Naive thymus-derived CD4-positive, alpha-beta T cell (primary cell): ENCODE measurements at regions of chr17 and their contacts with region 1.

Region 1: DNA sequence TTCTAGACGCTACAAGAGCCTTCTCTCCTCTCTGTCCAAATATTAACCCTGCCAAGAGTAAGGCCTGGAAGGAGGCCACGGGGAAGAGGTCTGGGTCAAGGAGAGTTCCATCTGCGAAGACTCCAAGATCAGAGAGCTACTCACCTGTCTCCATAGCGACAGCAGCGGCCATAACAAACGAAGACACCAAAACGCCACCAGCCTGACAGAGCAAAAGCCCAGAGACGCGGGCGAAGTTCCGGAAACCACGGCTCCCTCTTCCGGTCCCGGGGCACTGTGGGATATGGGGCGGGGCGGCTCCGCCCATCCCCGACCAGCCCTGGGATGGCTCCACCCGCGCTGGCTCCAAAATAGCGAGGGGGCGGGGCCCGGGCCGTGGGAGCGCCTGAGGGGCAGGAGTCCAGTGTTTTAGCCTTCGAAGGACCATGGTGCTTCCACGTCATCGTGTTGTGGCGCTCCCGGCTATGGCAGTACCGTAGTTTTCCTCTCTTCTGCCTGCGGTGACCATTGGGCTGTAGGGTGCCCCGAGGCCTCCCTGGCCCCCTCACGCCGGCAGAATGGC is at the starts of genes C17orf100 and MED31:
- DNase-seq: peak; percentile 89 to 97 (median 93)
- ATAC-seq: peak; percentile 96
- H3K4me3 ChIP-seq: peak within 1 kb of the TSS; percentile 99
- H3K4me3 Mint-ChIP-seq: peak within 1 kb of the TSS; percentile 89 to 100 (median 96)
- H3K27ac ChIP-seq: peak within 1 kb of the TSS; percentile 95
- H3K27ac Mint-ChIP-seq: peak within 1 kb of the TSS; percentile 97 to 100 (median 99)
- H3K4me1 ChIP-seq: peaks cover 21 to 26% of the 10 kb centered on the region in 2 donors
- H3K4me1 Mint-ChIP-seq: peaks cover 37 to 87% (median 78%) of the 10 kb centered on the region in 7 donors
- H3K27me3 ChIP-seq: no peaks in the 10 kb centered on the region
- H3K27me3 Mint-ChIP-seq: peaks cover 0 to 29% (median 0%) of the 10 kb centered on the region in 5 donors
- total RNA-seq, gene C17orf100: 1.9 to 6.1 (median 1.9) TPM
- total RNA-seq, gene MED31: 21.4 to 41.2 (median 28.2) TPM

Region 2: DNA sequence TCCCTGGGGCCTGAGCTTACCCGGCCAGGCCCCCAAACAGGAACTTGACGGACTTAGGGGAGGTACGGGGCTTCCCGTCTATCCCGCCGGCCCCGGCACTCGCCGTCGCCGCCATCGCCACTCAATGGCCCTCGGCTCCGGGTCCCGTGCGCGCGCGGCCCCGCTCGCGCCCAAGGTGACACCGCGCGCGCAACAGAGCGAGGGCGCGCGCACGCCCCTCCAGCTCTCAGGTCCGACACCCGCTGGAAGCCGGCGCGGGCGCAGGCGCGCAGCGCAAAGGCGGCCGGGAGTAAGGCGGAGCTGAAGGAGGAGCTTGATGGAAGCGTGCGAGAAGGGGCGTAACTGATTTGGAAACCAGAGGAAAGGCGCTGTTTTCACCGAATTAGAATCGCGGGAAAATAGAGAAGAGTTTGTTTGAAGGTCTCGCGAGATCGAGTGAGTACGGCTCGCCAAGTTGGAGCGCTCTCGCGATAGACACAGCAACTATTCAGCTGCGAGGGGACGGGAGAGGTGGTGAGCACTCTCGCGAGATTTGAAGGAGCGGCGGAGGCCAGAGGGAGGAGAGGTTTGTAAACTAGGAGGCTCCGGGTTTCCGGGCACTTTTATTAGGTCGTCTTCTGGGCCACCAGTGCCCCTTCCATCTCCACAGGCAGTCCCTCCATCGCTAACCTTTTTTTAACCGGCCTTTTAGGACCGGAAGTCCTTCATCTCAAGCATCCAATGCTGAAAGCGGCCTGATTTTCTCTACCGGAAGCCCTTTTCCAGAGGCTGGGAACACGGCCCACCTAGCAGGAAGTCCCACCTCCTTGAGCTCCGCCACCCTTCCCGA is 1711.4 kb before region 1 on chr17 and contains the starts of genes RNF167 and SLC25A11:
- CTCF ChIA-PET with region 1: no interaction called
- POLR2A ChIA-PET with region 1: no interaction called
- intact Hi-C with region 1: loop called in 1 of 2 experiments (anchors 10 kb)
- DNase-seq: peak; percentile 86 to 99 (median 98)
- ATAC-seq: peak; percentile 94
- H3K4me3 ChIP-seq: peak within 1 kb of the TSS; percentile 89
- H3K4me3 Mint-ChIP-seq: peak within 1 kb of the TSS; percentile 92 to 100 (median 98)
- H3K27ac ChIP-seq: peak within 1 kb of the TSS; percentile 89
- H3K27ac Mint-ChIP-seq: peak within 1 kb of the TSS; percentile 89 to 98 (median 95)
- H3K4me1 ChIP-seq: peaks cover 47 to 48% of the 10 kb centered on the region in 2 donors
- H3K4me1 Mint-ChIP-seq: peaks cover 52 to 77% (median 66%) of the 10 kb centered on the region in 7 donors
- H3K27me3 ChIP-seq: no peaks in the 10 kb centered on the region
- H3K27me3 Mint-ChIP-seq: no peaks in the 10 kb centered on the region
- total RNA-seq, gene RNF167: 97.3 to 248 (median 148) TPM
- total RNA-seq, gene SLC25A11: 27.0 to 82.6 (median 44.1) TPM

Region 3: GRCh38 chr17:5584383-5585286 is 1066.8 kb before region 1 on chr17 and contains the start of gene NLRP1:
- CTCF ChIA-PET with region 1: no interaction called
- POLR2A ChIA-PET with region 1: no interaction called
- intact Hi-C with region 1: loop called in 1 of 2 experiments (anchors 5 kb)
- DNase-seq: peak; percentile 78 to 97 (median 95)
- ATAC-seq: peak; percentile 96
- H3K4me3 ChIP-seq: peak within 1 kb of the TSS; percentile 97
- H3K4me3 Mint-ChIP-seq: peak within 1 kb of the TSS; percentile 94 to 100 (median 98)
- H3K27ac ChIP-seq: peak within 1 kb of the TSS; percentile 94
- H3K27ac Mint-ChIP-seq: peak within 1 kb of the TSS; percentile 90 to 100 (median 99)
- H3K4me1 ChIP-seq: peaks cover 44 to 67% of the 10 kb centered on the region in 2 donors
- H3K4me1 Mint-ChIP-seq: peaks cover 43 to 74% (median 63%) of the 10 kb centered on the region in 7 donors
- H3K27me3 ChIP-seq: no peaks in the 10 kb centered on the region
- H3K27me3 Mint-ChIP-seq: peaks cover 0 to 12% (median 0%) of the 10 kb centered on the region in 5 donors
- total RNA-seq, gene NLRP1: 86.6 to 360 (median 259) TPM

Region 4: DNA sequence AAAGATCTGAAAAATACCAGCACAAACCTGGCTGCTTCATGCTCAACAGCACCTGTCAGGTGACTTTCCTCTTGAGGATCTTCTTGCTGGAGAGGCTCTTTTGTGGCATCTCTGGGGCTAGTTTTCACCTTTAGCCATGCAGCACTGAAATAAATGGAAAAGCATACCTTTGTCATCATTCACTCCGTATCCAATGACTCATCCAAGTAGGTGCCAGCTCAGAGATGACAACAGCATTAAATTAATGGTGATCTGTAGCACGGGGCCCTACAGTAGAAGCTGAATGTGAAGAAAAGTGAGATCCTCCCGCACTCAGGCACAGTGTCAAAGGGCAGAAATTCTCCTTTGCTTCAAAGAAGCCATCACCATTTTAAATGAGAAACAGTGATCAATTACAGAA is 43.1 kb before region 1 on chr17:
- CTCF ChIA-PET with region 1: no interaction called
- POLR2A ChIA-PET with region 1: no interaction called
- intact Hi-C with region 1: no loop called
- DNase-seq: no peak
- ATAC-seq: no peak
- H3K4me3 ChIP-seq: no peak overlapping the region
- H3K4me3 Mint-ChIP-seq: no peak overlapping the region
- H3K27ac ChIP-seq: no peak overlapping the region
- H3K27ac Mint-ChIP-seq: no peak overlapping the region
- H3K4me1 ChIP-seq: no peaks in the 10 kb centered on the region
- H3K4me1 Mint-ChIP-seq: peaks cover 0 to 5% (median 0%) of the 10 kb centered on the region in 7 donors
- H3K27me3 ChIP-seq: no peaks in the 10 kb centered on the region
- H3K27me3 Mint-ChIP-seq: no peaks in the 10 kb centered on the region

Region 5: DNA sequence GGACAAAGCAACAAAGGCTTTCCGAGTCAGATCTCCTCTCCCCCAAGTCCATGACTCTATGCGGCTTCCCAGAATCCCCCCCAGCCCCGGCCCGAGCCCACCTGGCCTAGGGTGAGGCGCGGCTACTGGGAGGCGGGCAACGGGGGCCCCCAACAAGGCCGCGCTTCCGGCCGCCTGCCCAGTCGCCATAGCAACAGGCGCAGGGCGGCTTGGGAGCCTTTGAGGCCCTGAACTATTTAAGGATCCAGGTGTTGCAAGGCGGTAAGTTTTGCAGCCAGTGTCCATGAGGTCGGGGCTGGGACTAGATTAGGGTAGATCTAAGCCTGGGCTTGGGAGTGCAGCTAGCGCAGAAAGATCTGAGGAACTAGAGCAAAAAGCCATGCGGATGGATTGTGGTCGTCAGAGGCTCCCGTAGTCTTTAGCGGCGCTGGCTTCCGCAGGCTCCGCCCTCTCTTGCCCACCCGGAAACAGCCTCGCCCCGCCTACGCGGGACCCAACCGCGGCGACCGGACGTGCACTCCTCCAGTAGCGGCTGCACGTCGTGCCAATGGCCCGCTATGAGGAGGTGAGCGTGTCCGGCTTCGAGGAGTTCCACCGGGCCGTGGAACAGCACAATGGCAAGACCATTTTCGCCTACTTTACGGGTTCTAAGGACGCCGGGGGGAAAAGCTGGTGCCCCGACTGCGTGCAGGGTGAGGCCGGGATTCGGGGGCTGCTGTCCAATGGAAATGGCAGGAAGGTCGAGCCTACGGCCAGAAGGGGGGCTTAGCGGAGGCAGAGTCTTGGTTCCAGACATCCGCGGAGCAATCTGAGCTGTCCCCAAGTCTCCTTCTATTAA is 10.7 kb before region 1 on chr17 and contains the starts of genes KIAA0753 and TXNDC17:
- CTCF ChIA-PET with region 1: interaction called, 3 read pairs
- POLR2A ChIA-PET with region 1: interaction called, 51 read pairs
- intact Hi-C with region 1: loop called (anchors 1 kb)
- DNase-seq: peak; percentile 75 to 97 (median 85)
- ATAC-seq: peak; percentile 94
- H3K4me3 ChIP-seq: peak within 1 kb of the TSS; percentile 91
- H3K4me3 Mint-ChIP-seq: peak within 1 kb of the TSS; percentile 90 to 98 (median 96)
- H3K27ac ChIP-seq: peak within 1 kb of the TSS; percentile 86
- H3K27ac Mint-ChIP-seq: peak within 1 kb of the TSS; percentile 88 to 99 (median 97)
- H3K4me1 ChIP-seq: peaks cover 17 to 24% of the 10 kb centered on the region in 2 donors
- H3K4me1 Mint-ChIP-seq: peaks cover 35 to 64% (median 48%) of the 10 kb centered on the region in 7 donors
- H3K27me3 ChIP-seq: no peaks in the 10 kb centered on the region
- H3K27me3 Mint-ChIP-seq: no peaks in the 10 kb centered on the region
- total RNA-seq, gene KIAA0753: 12.4 to 18.4 (median 17.9) TPM
- total RNA-seq, gene TXNDC17: 14.3 to 70.3 (median 18.5) TPM

Region 6: GRCh38 chr17:6753006-6753445 is 101.6 kb after region 1 on chr17:
- CTCF ChIA-PET with region 1: no interaction called
- POLR2A ChIA-PET with region 1: no interaction called
- intact Hi-C with region 1: loop called in 1 of 2 experiments (anchors 5 kb)
- DNase-seq: peak in 6 of 9 donors; percentile 4 to 53 (median 36)
- ATAC-seq: no peak
- H3K4me3 ChIP-seq: no peak overlapping the region
- H3K4me3 Mint-ChIP-seq: peak overlapping the region; percentile 13 to 66 (median 44)
- H3K27ac ChIP-seq: peak overlapping the region; percentile 26
- H3K27ac Mint-ChIP-seq: peak overlapping the region; percentile 24 to 100 (median 86)
- H3K4me1 ChIP-seq: peaks cover 26 to 30% of the 10 kb centered on the region in 2 donors
- H3K4me1 Mint-ChIP-seq: peaks cover 37 to 60% (median 48%) of the 10 kb centered on the region in 7 donors
- H3K27me3 ChIP-seq: no peaks in the 10 kb centered on the region
- H3K27me3 Mint-ChIP-seq: peaks cover 0 to 18% (median 0%) of the 10 kb centered on the region in 5 donors

Region 7: GRCh38 chr17:7214300-7215135 is 563.1 kb after region 1 on chr17:
- CTCF ChIA-PET with region 1: no interaction called
- POLR2A ChIA-PET with region 1: no interaction called
- intact Hi-C with region 1: loop called in 1 of 2 experiments (anchors 10 kb)
- DNase-seq: peak; percentile 96 to 99 (median 97)
- ATAC-seq: peak; percentile 90
- H3K4me3 ChIP-seq: peak overlapping the region; percentile 61
- H3K4me3 Mint-ChIP-seq: peak overlapping the region; percentile 76 to 97 (median 94)
- H3K27ac ChIP-seq: peak overlapping the region; percentile 97
- H3K27ac Mint-ChIP-seq: peak overlapping the region; percentile 90 to 100 (median 99)
- H3K4me1 ChIP-seq: peaks cover 25 to 49% of the 10 kb centered on the region in 2 donors
- H3K4me1 Mint-ChIP-seq: peaks cover 36 to 69% (median 65%) of the 10 kb centered on the region in 7 donors
- H3K27me3 ChIP-seq: no peaks in the 10 kb centered on the region
- H3K27me3 Mint-ChIP-seq: peaks cover 0 to 16% (median 0%) of the 10 kb centered on the region in 5 donors